Activated CD4-positive, alpha-beta T cell treated with anti-CD3 and anti-CD28 coated beads for 36 hours (primary cell): ENCODE measurements at regions of chr2 and their contacts with region 1.

Region 1: DNA sequence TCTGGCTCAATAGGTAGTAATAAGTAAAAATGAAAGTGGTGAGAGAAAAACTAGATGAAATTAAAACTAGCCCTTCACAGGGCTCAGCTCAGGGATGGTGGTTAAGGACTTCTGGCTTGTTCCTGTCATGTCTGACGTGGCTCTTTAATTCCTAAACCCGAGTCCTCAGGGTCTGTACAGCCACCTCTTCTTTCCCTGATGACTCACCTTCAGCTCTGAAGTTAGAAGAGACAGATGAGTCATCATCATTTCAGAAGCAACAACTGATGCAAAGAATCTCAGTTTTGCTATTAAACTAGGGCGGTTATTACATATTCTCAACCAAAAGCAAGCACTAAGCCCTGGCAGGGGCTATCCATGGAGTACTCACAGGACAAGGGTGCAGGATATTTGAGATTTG is 24.0 kb upstream of the ITGB6 start:
- DNase-seq: peak; percentile 56
- ATAC-seq: peak; percentile 78
- H3K4me3 Mint-ChIP-seq: no peak overlapping the region
- H3K27ac Mint-ChIP-seq: peak overlapping the region; percentile 75
- H3K4me1 Mint-ChIP-seq: peaks cover 56% of the 10 kb centered on the region
- H3K27me3 Mint-ChIP-seq: peaks cover 14% of the 10 kb centered on the region

Region 2: DNA sequence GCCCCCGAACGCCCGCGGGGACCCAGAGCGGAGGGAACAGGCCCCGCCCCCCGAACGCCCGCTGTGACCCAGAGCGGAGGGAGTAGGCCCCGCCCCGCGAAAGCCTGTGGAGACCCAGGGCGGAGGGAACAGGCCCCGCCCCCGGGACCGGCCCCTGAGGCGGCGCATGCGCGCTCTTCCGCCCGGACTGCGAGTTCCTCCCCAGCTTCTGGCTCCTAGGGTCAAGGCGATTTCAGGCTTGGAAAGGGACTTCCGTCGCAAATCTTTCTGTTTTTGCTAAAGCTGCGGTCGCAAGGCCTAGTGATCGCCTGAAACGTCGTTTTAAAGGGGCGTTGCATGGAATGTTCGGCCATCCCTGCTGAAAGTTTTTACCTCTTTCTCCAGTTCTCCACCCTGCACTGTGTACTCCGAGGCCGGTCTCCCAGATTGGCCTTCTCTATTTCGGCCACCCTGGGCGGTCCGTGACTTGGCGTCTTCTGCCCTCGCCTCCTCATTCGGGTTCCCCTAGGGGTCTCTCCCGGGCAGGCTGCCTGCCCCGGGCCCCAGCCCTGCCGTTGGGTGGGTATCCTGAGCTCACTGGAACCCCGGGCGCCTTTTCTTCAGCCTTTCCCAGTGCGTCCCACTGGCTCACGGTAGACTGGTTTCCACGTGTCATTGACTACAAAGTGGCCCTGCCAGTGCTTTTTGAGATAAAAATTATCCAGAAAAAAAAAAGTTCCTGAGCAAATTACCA is 937.2 kb before region 1 on chr2:
- CTCF ChIA-PET with region 1: no interaction called
- POLR2A ChIA-PET with region 1: no interaction called
- intact Hi-C with region 1: loop called in 1 of 2 experiments (anchors 5 kb)
- DNase-seq: peak; percentile 99
- ATAC-seq: peak; percentile 99
- H3K4me3 Mint-ChIP-seq: peak overlapping the region; percentile 84
- H3K27ac Mint-ChIP-seq: peak overlapping the region; percentile 83
- H3K4me1 Mint-ChIP-seq: peaks cover 29% of the 10 kb centered on the region
- H3K27me3 Mint-ChIP-seq: no peaks in the 10 kb centered on the region

Region 3: DNA sequence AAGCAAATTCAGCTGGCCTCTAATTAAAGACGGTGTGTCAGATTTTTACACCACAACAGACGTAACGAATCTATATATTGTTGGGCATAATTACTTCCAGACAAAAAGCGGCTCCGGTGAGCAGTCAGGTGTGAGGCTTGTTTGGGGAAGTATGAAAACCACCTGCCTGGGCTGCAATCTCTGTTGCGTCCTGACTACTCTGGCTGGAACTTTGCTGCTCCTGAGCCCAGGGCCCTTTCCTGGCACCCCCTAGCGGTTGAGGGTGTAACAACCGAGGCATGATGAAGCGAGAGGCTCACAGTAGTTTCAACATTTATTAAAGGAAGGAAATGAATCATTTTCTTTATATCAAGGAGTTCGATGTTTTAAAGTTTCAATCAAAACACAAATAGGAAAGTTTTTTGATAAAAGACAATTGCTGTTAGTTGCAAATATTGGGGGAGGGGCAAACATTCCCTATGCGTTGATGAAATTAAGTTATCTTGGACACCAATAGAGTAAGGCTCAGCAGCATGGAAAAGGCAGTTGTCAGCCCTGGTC is 13.4 kb before region 1 on chr2:
- CTCF ChIA-PET with region 1: interaction called, 18 read pairs
- POLR2A ChIA-PET with region 1: no interaction called
- intact Hi-C with region 1: no loop called
- DNase-seq: peak; percentile 88
- ATAC-seq: peak; percentile 90
- H3K4me3 Mint-ChIP-seq: no peak overlapping the region
- H3K27ac Mint-ChIP-seq: no peak overlapping the region
- H3K4me1 Mint-ChIP-seq: peaks cover 33% of the 10 kb centered on the region
- H3K27me3 Mint-ChIP-seq: peaks cover 6% of the 10 kb centered on the region

Region 4: GRCh38 chr2:160294339-160294803 is 70.3 kb after region 1 on chr2:
- CTCF ChIA-PET with region 1: no interaction called
- POLR2A ChIA-PET with region 1: no interaction called
- intact Hi-C with region 1: loop called (anchors 2 to 5 kb)
- DNase-seq: peak; percentile 69
- ATAC-seq: peak; percentile 93
- H3K4me3 Mint-ChIP-seq: no peak overlapping the region
- H3K27ac Mint-ChIP-seq: peak overlapping the region; percentile 88
- H3K4me1 Mint-ChIP-seq: peaks cover 86% of the 10 kb centered on the region
- H3K27me3 Mint-ChIP-seq: no peaks in the 10 kb centered on the region

Region 5: GRCh38 chr2:160324161-160324800 is 100.2 kb after region 1 on chr2:
- CTCF ChIA-PET with region 1: interaction called, 3 read pairs
- POLR2A ChIA-PET with region 1: no interaction called
- intact Hi-C with region 1: loop called (anchors 1 kb)
- DNase-seq: peak; percentile 71
- ATAC-seq: no peak
- H3K4me3 Mint-ChIP-seq: no peak overlapping the region
- H3K27ac Mint-ChIP-seq: peak overlapping the region; percentile 39
- H3K4me1 Mint-ChIP-seq: peaks cover 85% of the 10 kb centered on the region
- H3K27me3 Mint-ChIP-seq: no peaks in the 10 kb centered on the region

Region 6: DNA sequence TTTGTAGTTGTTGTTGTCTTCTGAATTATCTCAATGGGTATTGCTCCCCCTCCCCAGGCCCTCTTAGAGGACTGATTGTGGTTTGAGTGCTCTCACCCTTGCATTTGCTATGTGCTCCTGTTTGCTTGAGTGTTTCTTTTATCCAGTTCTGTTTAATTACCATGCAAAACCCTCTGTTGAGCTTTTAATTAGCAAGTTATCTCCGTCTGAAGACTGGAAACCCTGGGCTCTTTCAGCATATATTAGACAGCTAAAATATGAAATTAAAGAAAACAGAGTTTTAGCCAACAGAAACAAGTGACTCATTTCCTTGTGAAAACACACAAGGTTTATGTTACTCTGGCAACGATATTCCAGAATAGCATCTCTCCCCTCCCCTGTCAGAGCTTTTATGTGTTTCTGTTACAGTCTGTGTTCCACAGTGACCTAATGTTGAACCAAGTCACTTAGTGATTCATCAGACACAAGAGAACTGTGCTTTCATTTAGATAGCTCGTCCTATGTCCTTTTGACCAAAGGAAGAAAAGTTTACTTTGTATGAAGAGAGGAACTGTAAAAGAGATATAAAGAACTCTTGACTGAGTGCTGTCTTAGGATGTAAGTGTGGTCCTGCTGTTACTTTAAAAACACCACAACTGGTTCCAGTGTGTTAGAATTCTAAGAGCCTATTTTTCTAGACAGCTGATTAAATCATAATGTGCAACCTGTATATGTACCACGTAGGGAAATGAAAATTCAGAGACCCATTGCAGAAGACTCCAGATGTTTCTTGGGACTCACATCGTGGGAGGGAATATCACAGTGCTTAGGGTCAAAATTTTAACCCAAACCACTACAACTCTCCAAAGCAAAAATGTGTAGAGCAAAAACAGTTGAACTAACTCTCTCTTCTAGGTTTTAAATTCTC is 442.3 kb after region 1 on chr2:
- CTCF ChIA-PET with region 1: no interaction called
- POLR2A ChIA-PET with region 1: no interaction called
- intact Hi-C with region 1: loop called in 1 of 2 experiments (anchors 1 kb)
- DNase-seq: no peak
- ATAC-seq: peak; percentile 96
- H3K4me3 Mint-ChIP-seq: no peak overlapping the region
- H3K27ac Mint-ChIP-seq: peak overlapping the region; percentile 51
- H3K4me1 Mint-ChIP-seq: peaks cover 18% of the 10 kb centered on the region
- H3K27me3 Mint-ChIP-seq: no peaks in the 10 kb centered on the region

Region 7: DNA sequence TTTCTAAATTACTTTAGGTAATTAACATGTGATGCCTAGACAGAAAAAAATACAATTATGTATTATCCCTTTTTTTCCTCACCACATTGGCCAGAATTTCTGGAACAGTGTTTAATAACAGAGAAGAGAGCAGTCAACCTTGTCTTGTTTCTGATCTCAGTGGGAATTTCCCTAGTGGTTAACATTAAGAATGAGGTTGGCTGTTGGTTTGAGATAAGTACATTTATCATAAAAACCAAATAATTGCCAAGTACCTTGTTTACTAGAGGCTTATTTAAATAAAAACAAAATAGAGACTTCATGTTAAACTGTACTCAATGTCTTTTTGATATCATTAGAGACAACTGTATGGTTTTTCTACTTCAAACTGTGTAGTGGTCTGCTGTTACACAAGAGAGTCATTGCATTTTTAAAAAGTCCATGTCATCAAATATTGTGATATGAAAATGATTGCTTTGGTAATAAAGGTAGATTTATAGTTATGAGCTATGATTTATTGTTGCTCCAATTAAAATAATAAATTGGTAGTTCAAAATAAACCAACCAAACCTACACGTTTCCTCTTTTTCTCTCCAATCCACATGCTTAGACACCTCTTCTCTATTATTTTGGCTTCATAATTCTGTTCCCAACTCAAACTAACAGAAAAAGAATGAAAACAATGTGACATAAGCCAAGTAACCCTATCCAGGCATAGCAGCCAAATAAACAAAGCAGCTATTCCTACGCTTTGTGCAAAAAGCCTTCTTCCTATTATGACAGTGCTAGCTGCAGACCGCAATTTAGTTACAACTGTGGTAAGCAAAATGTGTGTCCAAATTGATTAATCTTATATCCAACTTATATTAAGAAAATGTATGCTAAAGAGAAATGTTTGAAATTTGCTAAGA is 915.3 kb after region 1 on chr2:
- CTCF ChIA-PET with region 1: no interaction called
- POLR2A ChIA-PET with region 1: no interaction called
- intact Hi-C with region 1: no loop called
- DNase-seq: no peak
- ATAC-seq: peak; percentile 15
- H3K4me3 Mint-ChIP-seq: peak overlapping the region; percentile 83
- H3K27ac Mint-ChIP-seq: peak overlapping the region; percentile 90
- H3K4me1 Mint-ChIP-seq: peaks cover 77% of the 10 kb centered on the region
- H3K27me3 Mint-ChIP-seq: no peaks in the 10 kb centered on the region

Region 8: GRCh38 chr2:161900241-161900640 is 1676.2 kb after region 1 on chr2:
- CTCF ChIA-PET with region 1: no interaction called
- POLR2A ChIA-PET with region 1: no interaction called
- intact Hi-C with region 1: no loop called
- DNase-seq: no peak
- ATAC-seq: no peak
- H3K4me3 Mint-ChIP-seq: no peak overlapping the region
- H3K27ac Mint-ChIP-seq: no peak overlapping the region
- H3K4me1 Mint-ChIP-seq: peaks cover 1% of the 10 kb centered on the region
- H3K27me3 Mint-ChIP-seq: peaks cover 4% of the 10 kb centered on the region